Ascending aorta (tissue), 2 donors: ENCODE measurements at regions of chr3 and their contacts with region 1.

Region 1: GRCh38 chr3:64399205-64399800 is 174.0 kb upstream of the PRICKLE2 start:
- DNase-seq: no peak
- H3K4me3 ChIP-seq: no peak overlapping the region
- H3K27ac ChIP-seq: no peak overlapping the region
- H3K4me1 ChIP-seq: no peaks in the 10 kb centered on the region
- H3K27me3 ChIP-seq: no peaks in the 10 kb centered on the region
- CTCF ChIP-seq: peak; percentile 53 to 71 (median 69)

Region 2: GRCh38 chr3:64030741-64031140 is 368.6 kb before region 1 on chr3:
- intact Hi-C with region 1: loop called (anchors 1 kb)
- DNase-seq: peak in 1 of 2 donors; percentile 76
- H3K4me3 ChIP-seq: peak overlapping the region; percentile 41 to 53
- H3K27ac ChIP-seq: no peak overlapping the region
- H3K4me1 ChIP-seq: no peaks in the 10 kb centered on the region
- H3K27me3 ChIP-seq: no peaks in the 10 kb centered on the region
- CTCF ChIP-seq: peak; percentile 86 to 91 (median 87)

Region 3: DNA sequence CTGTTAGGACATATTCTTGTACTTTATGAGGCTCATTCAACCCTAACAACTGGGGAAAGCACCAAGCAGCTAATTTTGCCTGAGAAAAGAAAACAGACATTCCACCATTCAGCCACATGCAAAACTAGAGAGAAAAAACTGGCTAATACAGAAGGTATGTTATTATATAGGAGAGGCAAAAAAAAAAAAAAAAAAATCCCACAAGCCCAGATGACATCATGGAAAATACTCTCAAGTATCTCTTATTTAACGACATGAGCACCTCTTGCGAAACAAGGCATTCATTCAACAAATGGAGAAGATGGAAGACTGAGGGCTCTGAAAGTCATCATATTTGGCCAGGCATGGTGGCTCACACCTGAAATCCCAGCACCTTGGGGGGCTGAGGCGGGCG is 235.6 kb before region 1 on chr3:
- intact Hi-C with region 1: loop called (anchors 10 kb)
- DNase-seq: no peak
- H3K4me3 ChIP-seq: no peak overlapping the region
- H3K27ac ChIP-seq: no peak overlapping the region
- H3K4me1 ChIP-seq: peaks cover 0 to 40% of the 10 kb centered on the region in 2 donors
- H3K27me3 ChIP-seq: no peaks in the 10 kb centered on the region
- CTCF ChIP-seq: no peak

Region 4: DNA sequence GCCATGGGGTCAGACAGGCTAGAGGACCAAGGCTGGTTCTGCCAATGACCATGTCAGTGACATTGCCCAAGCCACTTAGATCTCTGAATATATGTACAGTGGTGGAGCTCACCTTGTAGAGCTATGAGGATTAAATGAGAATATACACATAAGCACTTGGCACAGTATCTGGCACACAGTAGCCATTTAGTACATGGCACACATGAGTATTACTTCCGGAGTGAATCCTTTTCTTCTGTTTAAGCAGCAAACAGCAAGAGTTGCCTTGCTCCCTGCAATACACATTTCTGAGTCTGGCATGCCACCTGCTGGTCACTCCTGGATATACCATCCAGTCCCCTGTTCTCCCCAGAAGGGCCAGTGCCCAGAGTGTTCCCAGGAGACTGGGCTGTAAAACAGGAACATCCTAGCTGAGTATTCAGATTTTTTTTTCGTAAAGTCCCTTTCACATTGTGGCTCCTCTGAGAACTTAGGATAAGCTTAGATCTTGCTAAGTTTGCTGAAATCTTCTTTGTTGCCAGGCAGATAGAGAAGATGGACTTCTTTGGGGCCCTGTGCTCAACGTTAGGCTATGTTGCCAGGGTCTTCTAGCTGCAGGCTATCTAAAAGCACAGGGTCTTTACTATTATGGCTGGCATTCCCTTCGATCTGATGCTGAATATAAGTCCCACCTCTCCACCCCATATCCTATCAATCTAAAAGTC is 85.1 kb after region 1 on chr3:
- intact Hi-C with region 1: loop called (anchors 5 kb)
- DNase-seq: peak in 1 of 2 donors; percentile 82
- H3K4me3 ChIP-seq: no peak overlapping the region
- H3K27ac ChIP-seq: no peak overlapping the region
- H3K4me1 ChIP-seq: no peaks in the 10 kb centered on the region
- H3K27me3 ChIP-seq: no peaks in the 10 kb centered on the region
- CTCF ChIP-seq: peak; percentile 80 to 83 (median 83)